Calu3 (cell line): ENCODE measurements at regions of chr1 and their contacts with region 1.

Region 1: DNA sequence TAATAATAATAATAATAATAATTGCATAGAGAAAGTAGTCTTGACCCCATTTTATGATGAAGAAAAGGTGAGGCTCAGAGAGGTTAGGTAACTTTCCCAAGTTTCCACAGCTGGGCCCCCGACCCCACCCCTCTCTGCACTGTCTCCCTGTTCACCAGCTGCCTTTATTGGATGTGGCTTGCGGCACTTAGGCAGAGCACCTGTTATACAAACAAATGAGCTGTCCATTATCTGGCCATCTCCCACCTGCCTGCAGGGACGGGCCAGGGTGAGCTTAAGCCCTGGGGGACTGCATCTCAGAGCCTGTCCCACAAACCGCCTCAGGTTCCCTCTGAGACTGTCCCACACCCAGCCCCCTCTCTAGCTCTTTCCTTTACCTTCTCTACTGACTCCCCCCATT is 10.1 kb upstream of the EFNA1 start:
- DNase-seq: no peak
- H3K4me3 Mint-ChIP-seq: no peak overlapping the region
- H3K27ac Mint-ChIP-seq: no peak overlapping the region
- H3K4me1 Mint-ChIP-seq: peaks cover 7% of the 10 kb centered on the region
- H3K27me3 Mint-ChIP-seq: peaks cover 43% of the 10 kb centered on the region
- CTCF ChIP-seq: no peak

Region 2: DNA sequence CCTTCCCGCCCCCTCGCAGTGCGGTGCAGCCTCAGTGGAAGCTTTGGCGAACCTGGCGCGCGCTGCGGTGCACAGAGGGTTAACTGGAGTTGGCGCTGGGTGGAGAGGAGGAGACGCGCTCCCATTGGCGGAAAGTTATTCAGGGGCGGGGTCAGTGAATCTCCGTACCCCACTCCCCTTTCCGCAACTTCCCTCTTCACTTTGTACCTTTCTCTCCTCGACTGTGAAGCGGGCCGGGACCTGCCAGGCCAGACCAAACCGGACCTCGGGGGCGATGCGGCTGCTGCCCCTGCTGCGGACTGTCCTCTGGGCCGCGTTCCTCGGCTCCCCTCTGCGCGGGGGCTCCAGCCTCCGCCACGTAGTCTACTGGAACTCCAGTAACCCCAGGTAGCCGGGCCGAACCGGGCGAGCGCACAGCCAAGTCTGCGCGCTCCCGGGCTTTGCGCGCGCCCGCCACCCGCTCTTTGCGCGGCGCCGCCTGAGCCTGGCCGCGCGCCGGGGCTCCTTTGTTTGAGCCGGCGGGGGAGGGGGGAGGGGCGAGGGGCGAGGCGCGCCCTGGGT is 54.0 kb before region 1 on chr1 and contains the start of gene EFNA4:
- CTCF ChIA-PET with region 1: no interaction called
- intact Hi-C with region 1: no loop called
- DNase-seq: peak; percentile 90
- H3K4me3 Mint-ChIP-seq: peak within 1 kb of the TSS; percentile 76
- H3K27ac Mint-ChIP-seq: peak within 1 kb of the TSS; percentile 89
- H3K4me1 Mint-ChIP-seq: peaks cover 30% of the 10 kb centered on the region
- H3K27me3 Mint-ChIP-seq: no peaks in the 10 kb centered on the region
- CTCF ChIP-seq: no peak
- total RNA-seq, gene EFNA4: 12.6 and 13.9 TPM in 2 replicates

Region 3: DNA sequence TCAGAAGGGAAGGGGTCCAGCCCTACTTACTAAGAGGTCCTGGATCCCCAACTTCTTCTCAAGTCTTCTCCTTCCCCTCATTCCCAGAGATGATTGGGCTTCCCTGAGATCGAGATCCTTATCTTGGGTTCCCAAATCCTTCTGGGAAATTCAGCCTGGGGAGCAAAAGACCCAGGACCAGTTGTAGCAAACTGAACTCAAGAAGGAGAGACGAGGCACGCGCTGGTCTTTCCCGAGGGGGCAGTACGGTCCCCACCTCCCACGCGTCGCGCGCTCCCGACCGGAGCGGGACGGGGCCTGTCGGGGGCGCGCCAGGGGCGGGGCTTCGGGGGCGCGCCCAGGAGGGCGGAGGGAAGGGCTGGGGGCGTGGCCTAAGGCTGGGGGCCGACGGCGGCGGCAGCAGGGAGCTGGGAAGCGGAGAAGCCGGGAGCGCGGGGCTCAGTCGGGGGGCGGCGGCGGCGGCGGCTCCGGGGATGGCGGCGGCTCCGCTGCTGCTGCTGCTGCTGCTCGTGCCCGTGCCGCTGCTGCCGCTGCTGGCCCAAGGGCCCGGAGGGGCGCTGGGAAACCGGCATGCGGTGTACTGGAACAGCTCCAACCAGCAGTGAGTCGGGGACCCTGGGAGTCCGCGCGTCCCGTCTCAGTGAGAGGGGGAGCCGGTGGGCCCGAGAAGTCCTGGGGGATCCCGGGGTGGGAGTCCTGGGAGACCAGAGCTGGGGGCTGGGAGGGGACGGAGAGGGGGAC is 39.0 kb before region 1 on chr1 and contains the start of gene EFNA3:
- CTCF ChIA-PET with region 1: no interaction called
- intact Hi-C with region 1: no loop called
- DNase-seq: peak; percentile 88
- H3K4me3 Mint-ChIP-seq: peak within 1 kb of the TSS; percentile 58
- H3K27ac Mint-ChIP-seq: peak within 1 kb of the TSS; percentile 16
- H3K4me1 Mint-ChIP-seq: peaks cover 46% of the 10 kb centered on the region
- H3K27me3 Mint-ChIP-seq: peaks cover 90% of the 10 kb centered on the region
- CTCF ChIP-seq: no peak
- total RNA-seq, gene EFNA3: 1.7 and 3.4 TPM in 2 replicates

Region 4: GRCh38 chr1:155339515-155340097 is 222.0 kb after region 1 on chr1:
- CTCF ChIA-PET with region 1: no interaction called
- intact Hi-C with region 1: no loop called
- DNase-seq: no peak
- H3K4me3 Mint-ChIP-seq: no peak overlapping the region
- H3K27ac Mint-ChIP-seq: no peak overlapping the region
- H3K4me1 Mint-ChIP-seq: no peaks in the 10 kb centered on the region
- H3K27me3 Mint-ChIP-seq: no peaks in the 10 kb centered on the region
- CTCF ChIP-seq: no peak

Region 5: DNA sequence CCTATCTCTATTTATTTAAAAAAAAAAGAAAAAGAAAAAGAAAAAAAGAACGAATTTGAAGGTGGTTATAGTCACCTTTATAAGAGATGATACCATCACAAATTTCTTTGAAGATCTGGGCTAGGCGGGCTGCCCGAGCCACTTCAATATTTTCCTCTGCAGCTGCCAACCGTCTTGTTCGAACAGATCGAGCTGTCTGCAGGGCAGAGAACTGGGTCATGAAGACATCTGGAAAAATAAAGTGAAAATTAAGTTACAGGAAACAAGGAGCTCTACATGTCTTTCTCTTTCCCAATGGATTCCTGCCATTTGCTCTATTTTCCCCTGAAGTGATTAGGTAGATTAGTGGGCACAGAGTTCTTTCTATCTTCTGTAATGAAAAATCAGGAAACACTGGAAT is 235.0 kb after region 1 on chr1:
- CTCF ChIA-PET with region 1: interaction called, 10 read pairs
- intact Hi-C with region 1: no loop called
- DNase-seq: no peak
- H3K4me3 Mint-ChIP-seq: no peak overlapping the region
- H3K27ac Mint-ChIP-seq: no peak overlapping the region
- H3K4me1 Mint-ChIP-seq: no peaks in the 10 kb centered on the region
- H3K27me3 Mint-ChIP-seq: no peaks in the 10 kb centered on the region
- CTCF ChIP-seq: no peak

Region 6: DNA sequence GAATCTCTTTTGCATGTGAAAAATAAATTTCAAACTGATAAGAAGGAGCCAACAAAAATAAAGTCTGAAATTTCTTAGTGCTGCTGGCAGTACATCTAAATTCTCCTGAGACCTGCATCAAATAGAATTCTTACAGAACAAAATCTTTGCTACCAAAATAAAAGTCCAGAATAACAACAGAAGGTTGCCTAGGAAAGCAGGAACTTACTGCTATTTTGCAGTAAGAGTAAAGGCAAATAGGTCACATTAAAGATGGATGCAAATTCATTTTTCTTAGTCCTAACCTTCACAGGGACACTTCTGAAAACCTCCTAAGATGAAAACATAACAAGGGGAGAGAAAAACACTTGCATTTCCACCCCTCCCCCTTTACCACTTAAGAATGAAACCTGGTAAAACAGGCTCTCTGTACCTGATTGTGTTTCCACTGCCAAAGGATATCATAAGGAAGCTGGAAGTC is 262.0 kb after region 1 on chr1:
- CTCF ChIA-PET with region 1: no interaction called
- intact Hi-C with region 1: no loop called
- DNase-seq: no peak
- H3K4me3 Mint-ChIP-seq: no peak overlapping the region
- H3K27ac Mint-ChIP-seq: no peak overlapping the region
- H3K4me1 Mint-ChIP-seq: no peaks in the 10 kb centered on the region
- H3K27me3 Mint-ChIP-seq: no peaks in the 10 kb centered on the region
- CTCF ChIP-seq: no peak